MCF 10A (cell line): ENCODE measurements at regions of chrX and their contacts with region 1.

Region 1: GRCh38 chrX:139429913-139430312 is 100.6 kb upstream of the F9 start:
- DNase-seq: peak; percentile 14
- H3K4me3 Mint-ChIP-seq: no peak overlapping the region
- H3K27ac Mint-ChIP-seq: no peak overlapping the region
- H3K4me1 Mint-ChIP-seq: no peaks in the 10 kb centered on the region
- H3K27me3 Mint-ChIP-seq: no peaks in the 10 kb centered on the region
- CTCF ChIP-seq: peak; percentile 19

Region 2: GRCh38 chrX:138847928-138848327 is 582.0 kb before region 1 on chrX:
- CTCF ChIA-PET with region 1: no interaction called
- POLR2A ChIA-PET with region 1: no interaction called
- intact Hi-C with region 1: loop called (anchors 10 kb)
- DNase-seq: peak; percentile 31
- H3K4me3 Mint-ChIP-seq: no peak overlapping the region
- H3K27ac Mint-ChIP-seq: no peak overlapping the region
- H3K4me1 Mint-ChIP-seq: no peaks in the 10 kb centered on the region
- H3K27me3 Mint-ChIP-seq: no peaks in the 10 kb centered on the region
- CTCF ChIP-seq: peak; percentile 34

Region 3: DNA sequence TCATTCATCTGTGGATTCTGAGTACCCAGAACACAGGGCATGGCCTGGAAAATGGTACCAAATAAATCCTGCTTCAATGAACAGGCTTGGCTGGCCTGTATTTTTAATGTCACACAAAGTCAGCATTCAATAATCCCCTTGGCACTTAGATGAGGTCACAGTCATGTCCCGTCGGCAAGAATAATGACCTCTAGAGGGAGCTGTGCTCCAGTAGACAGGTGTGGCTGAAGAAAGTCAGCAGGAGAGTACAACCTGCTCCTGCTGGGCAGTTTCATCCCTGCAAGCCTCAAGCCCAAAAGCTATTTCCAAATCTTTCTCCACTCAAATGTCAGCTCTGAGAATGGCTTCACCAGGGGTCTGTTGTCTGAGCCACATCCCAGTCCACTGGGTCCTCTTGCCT is 303.4 kb before region 1 on chrX:
- CTCF ChIA-PET with region 1: no interaction called
- POLR2A ChIA-PET with region 1: no interaction called
- intact Hi-C with region 1: loop called (anchors 1 kb)
- DNase-seq: peak; percentile 66
- H3K4me3 Mint-ChIP-seq: no peak overlapping the region
- H3K27ac Mint-ChIP-seq: no peak overlapping the region
- H3K4me1 Mint-ChIP-seq: no peaks in the 10 kb centered on the region
- H3K27me3 Mint-ChIP-seq: no peaks in the 10 kb centered on the region
- CTCF ChIP-seq: peak; percentile 27